H1 (cell line): ENCODE measurements at regions of chr11 and their contacts with region 1.

Region 1: GRCh38 chr11:61516675-61517572 is 8.4 kb downstream of the LRRC10B start:
- DNase-seq: peak in 1 of 2 experiments; percentile 96
- H3K4me3 ChIP-seq: peak overlapping the region in 1 of 4 experiments; percentile 39; a peak in 1 of 8 replicates
- H3K27ac ChIP-seq: no peak overlapping the region
- H3K4me1 ChIP-seq: peaks cover 0 to 41% (median 27%) of the 10 kb centered on the region in 4 experiments; a peak in 6 of 7 replicates
- H3K27me3 ChIP-seq: no peaks in the 10 kb centered on the region; a peak in 2 of 7 replicates
- CTCF ChIP-seq: peak in 2 of 3 experiments; percentile 98; a peak in 3 of 4 replicates
- EP300 ChIP-seq: no peak
- POLR2A ChIP-seq: no peak
- RAD21 ChIP-seq: peak; percentile 98 to 99

Region 2: DNA sequence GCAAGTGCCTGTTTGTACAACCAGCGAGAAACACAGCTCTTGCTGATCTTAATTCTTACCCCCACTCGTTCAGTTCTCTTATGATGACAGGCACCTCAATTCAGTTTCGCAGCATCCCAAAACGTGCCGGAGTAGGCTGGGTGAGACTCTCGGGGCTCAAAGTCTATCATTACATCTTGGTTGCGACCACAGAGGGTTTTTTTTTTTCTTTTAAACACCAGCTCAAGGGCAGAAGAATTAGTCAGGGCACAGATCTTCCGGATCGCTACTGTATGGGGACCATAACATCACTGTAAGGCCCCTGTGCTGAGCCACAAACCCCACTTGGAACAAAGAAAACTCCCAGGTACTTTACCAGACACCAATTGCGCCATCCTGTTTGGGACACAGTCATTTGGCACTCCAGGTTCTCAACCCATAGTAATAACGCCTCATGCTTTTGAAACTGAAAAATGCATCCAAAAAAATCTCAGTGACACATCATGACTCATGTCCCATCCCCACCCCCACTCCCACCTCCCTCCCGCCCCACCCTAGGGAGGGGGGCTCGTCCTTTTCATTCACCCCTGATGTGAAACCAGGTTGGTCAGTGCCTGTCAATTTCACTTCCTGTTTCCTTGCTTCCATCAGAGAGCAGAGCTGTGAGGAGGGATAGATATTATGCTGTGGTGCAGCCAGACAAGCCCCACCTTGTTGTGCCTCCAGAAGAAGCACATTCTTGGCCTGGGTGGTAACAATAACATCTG is 455.7 kb before region 1 on chr11:
- CTCF ChIA-PET with region 1: no interaction called
- POLR2A ChIA-PET with region 1: no interaction called
- DNase-seq: no peak
- H3K4me3 ChIP-seq: no peak overlapping the region
- H3K27ac ChIP-seq: no peak overlapping the region
- H3K4me1 ChIP-seq: no peaks in the 10 kb centered on the region
- H3K27me3 ChIP-seq: no peaks in the 10 kb centered on the region
- CTCF ChIP-seq: no peak
- EP300 ChIP-seq: no peak
- POLR2A ChIP-seq: no peak
- RAD21 ChIP-seq: no peak

Region 3: GRCh38 chr11:61417670-61418069 is 99.3 kb before region 1 on chr11:
- CTCF ChIA-PET with region 1: no interaction called
- POLR2A ChIA-PET with region 1: no interaction called
- DNase-seq: no peak
- H3K4me3 ChIP-seq: no peak overlapping the region
- H3K27ac ChIP-seq: no peak overlapping the region
- H3K4me1 ChIP-seq: no peaks in the 10 kb centered on the region
- H3K27me3 ChIP-seq: no peaks in the 10 kb centered on the region
- CTCF ChIP-seq: no peak
- EP300 ChIP-seq: no peak
- POLR2A ChIP-seq: no peak
- RAD21 ChIP-seq: no peak

Region 4: DNA sequence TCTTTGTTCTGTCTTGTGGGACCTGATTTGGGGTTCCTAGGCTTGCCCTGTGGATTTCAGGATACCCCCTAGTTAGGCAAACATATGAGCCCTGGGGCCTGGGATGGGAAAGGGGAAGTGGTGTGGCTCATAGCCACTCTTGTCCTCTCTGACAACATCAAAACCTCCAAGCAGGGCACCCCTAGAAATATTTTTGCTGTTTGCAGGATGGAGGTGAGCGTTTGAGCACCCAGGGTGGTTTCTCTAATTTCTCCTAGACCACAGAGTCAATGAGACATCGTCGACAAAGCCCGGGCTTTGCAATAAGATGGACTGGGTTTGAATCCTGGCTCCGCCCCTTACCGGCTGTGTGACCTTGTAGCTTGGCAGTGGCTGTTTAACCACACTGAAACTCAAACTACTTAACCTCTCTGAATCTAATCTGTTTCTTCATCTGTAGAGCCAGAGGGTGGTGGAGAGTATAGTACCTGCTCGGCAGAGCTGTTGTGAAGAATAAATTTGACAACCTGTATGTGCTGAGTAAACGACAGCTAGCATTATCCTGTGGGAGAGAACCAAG is 13.6 kb before region 1 on chr11:
- CTCF ChIA-PET with region 1: interaction called, 46 read pairs
- POLR2A ChIA-PET with region 1: interaction called, 14 read pairs
- DNase-seq: no peak
- H3K4me3 ChIP-seq: no peak overlapping the region
- H3K27ac ChIP-seq: no peak overlapping the region
- H3K4me1 ChIP-seq: peaks cover 9 to 26% (median 17%) of the 10 kb centered on the region in 4 experiments
- H3K27me3 ChIP-seq: peaks cover 5 to 31% (median 26%) of the 10 kb centered on the region in 4 experiments
- CTCF ChIP-seq: no peak
- EP300 ChIP-seq: no peak
- POLR2A ChIP-seq: no peak
- RAD21 ChIP-seq: no peak

Region 5: DNA sequence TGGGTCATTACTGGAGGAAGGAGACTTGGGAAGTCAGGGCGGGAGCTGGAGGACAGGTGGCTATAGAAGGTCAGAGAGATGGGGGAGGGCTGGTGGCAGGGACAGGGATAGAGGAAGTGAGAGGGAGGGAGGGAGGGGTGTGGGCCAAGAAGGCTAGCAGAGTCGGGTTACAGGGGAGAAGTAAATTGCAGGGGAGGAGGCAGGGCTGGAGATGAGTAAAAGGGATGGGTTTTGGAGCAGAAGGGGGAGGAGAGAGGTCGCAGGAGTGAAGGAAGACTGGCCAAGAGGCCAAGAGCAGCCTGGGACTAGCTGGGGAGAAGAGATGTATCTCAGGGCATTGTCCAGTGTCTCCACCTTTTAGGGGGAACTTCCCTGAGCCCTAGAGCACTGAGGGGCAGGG is 24.7 kb after region 1 on chr11:
- CTCF ChIA-PET with region 1: interaction called, 224 read pairs
- POLR2A ChIA-PET with region 1: interaction called, 3 read pairs
- DNase-seq: no peak
- H3K4me3 ChIP-seq: no peak overlapping the region
- H3K27ac ChIP-seq: no peak overlapping the region
- H3K4me1 ChIP-seq: peaks cover 5 to 35% (median 18%) of the 10 kb centered on the region in 4 experiments
- H3K27me3 ChIP-seq: no peaks in the 10 kb centered on the region; a peak in 1 of 7 replicates
- CTCF ChIP-seq: no peak
- EP300 ChIP-seq: no peak
- POLR2A ChIP-seq: no peak
- RAD21 ChIP-seq: no peak

Region 6: DNA sequence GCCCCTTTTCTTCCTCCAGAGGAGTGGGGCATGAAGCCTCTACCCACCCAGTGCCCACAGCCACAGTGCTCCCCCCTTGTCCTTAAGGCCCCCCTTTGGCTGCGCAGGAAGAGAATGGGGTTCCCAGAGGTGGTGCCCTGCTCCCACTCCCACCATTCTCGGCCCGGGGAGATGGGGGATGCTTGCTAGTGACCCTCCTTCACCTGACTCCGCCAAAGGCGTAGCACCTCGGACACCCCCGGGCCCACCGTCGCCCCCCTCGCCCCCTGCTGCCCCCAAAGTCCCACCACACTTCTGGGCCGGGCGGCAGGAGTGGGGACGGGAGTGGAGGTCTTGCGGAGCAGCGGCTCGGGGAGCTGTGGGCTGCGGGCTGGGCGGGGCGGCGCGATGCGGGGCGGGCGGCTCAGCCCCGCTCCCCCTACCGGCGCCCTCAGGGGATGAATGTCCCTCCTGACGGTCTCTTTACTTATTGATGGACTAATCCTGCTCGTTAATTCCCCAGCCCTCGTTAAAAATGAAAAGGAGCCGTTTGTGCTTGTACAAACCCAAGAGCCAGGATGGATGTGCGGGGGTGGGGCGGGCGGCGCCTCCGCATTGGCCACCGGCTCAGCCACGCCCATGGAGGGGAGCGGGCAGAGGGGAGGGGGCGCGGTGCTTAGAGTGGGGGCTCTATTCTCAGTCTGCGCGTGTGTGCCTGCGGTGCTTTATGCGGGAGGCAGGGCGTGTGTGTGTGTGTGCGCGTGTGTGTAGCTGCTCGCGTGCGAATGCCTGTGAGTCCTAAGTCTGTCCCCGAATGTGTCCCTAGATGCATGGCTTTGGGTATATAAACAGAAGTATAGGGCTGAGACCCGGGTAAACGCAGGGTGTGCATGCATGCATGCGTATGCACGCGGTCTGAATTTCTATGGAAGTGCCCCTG is 38.4 kb after region 1 on chr11:
- CTCF ChIA-PET with region 1: interaction called, 109 read pairs
- POLR2A ChIA-PET with region 1: no interaction called
- DNase-seq: peak in 1 of 2 experiments; percentile 72
- H3K4me3 ChIP-seq: peak overlapping the region; percentile 11 to 62 (median 34); a peak in 7 of 8 replicates
- H3K27ac ChIP-seq: no peak overlapping the region
- H3K4me1 ChIP-seq: peaks cover 0 to 27% (median 14%) of the 10 kb centered on the region in 4 experiments; a peak in 4 of 7 replicates
- H3K27me3 ChIP-seq: peaks cover 0 to 21% (median 20%) of the 10 kb centered on the region in 4 experiments; a peak in 6 of 7 replicates
- CTCF ChIP-seq: peak; percentile 32 to 45 (median 38); a peak in 3 of 4 replicates
- EP300 ChIP-seq: no peak
- POLR2A ChIP-seq: no peak
- RAD21 ChIP-seq: peak in 1 of 2 experiments; percentile 16; a peak in 1 of 4 replicates

Region 7: DNA sequence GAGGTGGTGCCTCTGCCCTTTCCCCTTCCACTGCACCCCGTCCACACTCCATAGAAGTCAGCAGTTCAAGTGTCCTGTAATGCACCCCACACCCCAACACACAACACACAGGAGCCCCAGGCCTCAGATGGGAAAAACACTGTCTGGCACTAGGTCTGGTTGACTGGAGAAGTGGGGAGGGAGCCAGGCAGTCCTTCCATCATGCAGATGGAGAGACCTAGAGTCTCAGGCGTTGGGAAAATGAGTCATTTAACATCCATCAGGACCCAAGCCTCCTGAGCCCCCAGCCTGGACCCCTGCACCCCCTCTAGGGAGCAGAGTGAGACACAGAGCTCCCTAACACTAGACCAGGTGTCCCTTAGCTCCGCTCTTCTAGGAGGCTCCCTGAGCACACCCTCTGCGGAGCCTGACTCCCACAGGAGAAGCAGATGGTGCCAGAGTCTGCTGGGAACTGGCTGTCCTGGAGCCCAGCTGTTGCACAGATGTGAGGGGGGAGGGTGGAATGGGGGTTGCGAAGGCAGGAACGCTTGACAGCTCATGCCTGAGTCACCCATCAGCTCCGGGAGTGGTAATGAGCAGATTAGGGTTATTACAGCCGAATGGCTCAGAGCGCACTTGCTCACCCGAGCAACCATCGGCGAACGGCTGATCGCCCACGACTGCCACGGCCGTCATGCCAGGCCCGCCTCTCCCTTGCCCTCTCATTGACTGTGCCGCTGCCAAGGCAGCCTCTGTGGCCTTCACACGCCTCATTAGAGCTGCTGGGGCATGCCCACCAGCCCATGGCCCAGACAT is 86.0 kb after region 1 on chr11:
- CTCF ChIA-PET with region 1: interaction called, 15 read pairs
- POLR2A ChIA-PET with region 1: no interaction called
- DNase-seq: no peak
- H3K4me3 ChIP-seq: no peak overlapping the region
- H3K27ac ChIP-seq: no peak overlapping the region
- H3K4me1 ChIP-seq: peaks cover 5 to 22% (median 18%) of the 10 kb centered on the region in 4 experiments
- H3K27me3 ChIP-seq: no peaks in the 10 kb centered on the region; a peak in 1 of 7 replicates
- CTCF ChIP-seq: no peak
- EP300 ChIP-seq: no peak
- POLR2A ChIP-seq: no peak
- RAD21 ChIP-seq: no peak